ENCODE measurements at regions of chr2 and their contacts with region 1.

Region 1: GRCh38 chr2:199979832-199980628 is 24.6 kb downstream of the MAIP1 start:
- DNase-seq: peak; percentile 96
- ATAC-seq: peak; percentile 80

Region 2: DNA sequence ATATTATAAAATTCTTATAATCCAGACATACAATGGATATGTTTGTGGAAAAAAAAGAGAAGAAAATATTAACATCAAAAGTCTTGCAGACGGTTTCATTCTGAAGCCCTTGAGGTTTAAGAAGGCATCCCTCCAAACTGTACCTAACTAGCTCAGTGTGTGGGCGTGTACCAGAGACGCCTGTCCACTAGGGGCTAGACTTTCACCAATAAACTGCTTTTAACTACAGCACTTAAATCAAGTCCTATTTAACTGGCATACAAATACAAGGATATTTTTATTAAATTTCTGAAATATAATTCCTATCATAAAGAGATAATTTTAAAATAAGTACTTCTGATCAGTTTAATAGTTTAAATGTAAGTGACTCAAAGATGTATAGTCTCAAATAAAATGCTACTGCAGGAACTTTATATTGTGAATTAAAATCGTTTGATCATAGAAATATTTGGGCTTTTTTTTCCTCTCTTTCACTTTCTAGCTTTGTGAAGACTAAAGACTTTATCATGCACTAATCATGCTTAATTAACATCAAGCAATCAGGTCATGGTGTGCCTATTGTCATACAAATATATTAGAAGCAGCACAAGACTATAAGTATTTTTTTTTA is 960.0 kb before region 1 on chr2:
- intact Hi-C with region 1: no loop called
- DNase-seq: no peak
- ATAC-seq: peak; percentile 70

Region 3: GRCh38 chr2:199459286-199460016 is 520.6 kb before region 1 on chr2:
- intact Hi-C with region 1: loop called (anchors 5 kb)
- DNase-seq: peak; percentile 96
- ATAC-seq: peak; percentile 89

Region 4: GRCh38 chr2:200338701-200339100 is 358.7 kb after region 1 on chr2:
- intact Hi-C with region 1: no loop called
- DNase-seq: no peak
- ATAC-seq: peak; percentile 76

Region 5: GRCh38 chr2:200483729-200484198 is 503.7 kb after region 1 on chr2:
- intact Hi-C with region 1: loop called (anchors 5 kb)
- DNase-seq: no peak
- ATAC-seq: no peak